ENCODE measurements at regions of chr7 and their contacts with region 1.

Region 1: GRCh38 chr7:76314042-76314721 is 11.7 kb downstream of the HSPB1 start:
- DNase-seq: peak; percentile 92
- H3K4me3 Mint-ChIP-seq: no peak overlapping the region
- H3K27ac Mint-ChIP-seq: peak overlapping the region; percentile 55
- H3K4me1 Mint-ChIP-seq: peaks cover 24% of the 10 kb centered on the region
- H3K27me3 Mint-ChIP-seq: no peaks in the 10 kb centered on the region

Region 2: GRCh38 chr7:76166404-76167255 is 147.6 kb before region 1 on chr7:
- intact Hi-C with region 1: loop called (anchors 1 kb)
- DNase-seq: peak; percentile 93
- H3K4me3 Mint-ChIP-seq: peak overlapping the region; percentile 85
- H3K27ac Mint-ChIP-seq: peak overlapping the region; percentile 85
- H3K4me1 Mint-ChIP-seq: peaks cover 10% of the 10 kb centered on the region
- H3K27me3 Mint-ChIP-seq: peaks cover 2% of the 10 kb centered on the region

Region 3: DNA sequence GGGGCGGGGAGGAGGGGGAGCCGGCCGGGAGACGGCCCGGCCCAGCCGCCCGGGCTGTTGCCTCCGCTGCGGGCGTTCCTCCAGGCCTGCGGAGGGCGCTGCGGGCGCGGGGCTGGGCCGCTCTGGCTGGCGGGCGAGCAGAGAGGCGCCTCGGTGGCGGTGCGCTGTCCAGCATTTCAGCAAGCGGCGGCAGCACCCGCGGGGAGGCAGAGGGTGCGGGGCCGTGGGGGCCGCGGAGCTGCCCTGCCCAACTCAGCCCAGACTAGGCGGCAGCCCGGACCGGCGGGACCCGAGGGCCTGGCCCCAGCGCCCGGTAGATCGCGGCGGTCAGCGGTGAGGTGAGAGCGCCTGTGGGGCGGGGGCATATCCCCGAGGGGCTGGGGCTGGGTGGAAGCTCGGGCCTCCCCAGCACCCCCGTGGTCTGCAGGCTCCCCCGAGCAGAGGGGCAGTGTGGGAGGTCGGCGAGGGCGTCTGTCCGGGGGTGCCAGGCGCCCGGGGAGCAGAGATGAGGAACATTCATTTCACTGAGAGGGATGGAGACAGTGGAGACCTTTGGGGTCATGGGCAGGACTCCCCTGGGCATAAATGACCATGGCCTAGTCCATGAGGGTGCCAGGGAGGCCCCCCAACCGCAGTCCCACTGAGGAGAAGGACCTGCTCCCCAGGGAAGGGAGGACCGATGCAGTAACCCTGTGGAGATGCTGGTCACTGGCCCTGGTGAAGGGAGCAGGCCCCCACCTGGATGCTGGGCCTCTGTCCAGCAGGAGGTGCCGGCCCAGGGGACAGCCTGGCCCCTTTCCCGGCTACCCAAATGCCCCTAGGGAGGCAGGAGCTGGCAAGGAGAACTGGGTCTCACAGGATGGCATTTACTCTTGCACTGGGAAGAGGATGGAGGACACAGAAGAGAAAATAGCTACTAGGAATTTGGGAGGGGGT is 112.2 kb before region 1 on chr7 and contains the start of gene SRRM3:
- intact Hi-C with region 1: loop called (anchors 1 kb)
- DNase-seq: peak; percentile 82
- H3K4me3 Mint-ChIP-seq: no peak within 1 kb of the TSS
- H3K27ac Mint-ChIP-seq: no peak within 1 kb of the TSS
- H3K4me1 Mint-ChIP-seq: no peaks in the 10 kb centered on the region
- H3K27me3 Mint-ChIP-seq: peaks cover 10% of the 10 kb centered on the region
- total RNA-seq, gene SRRM3: not detected in 2 replicates

Region 4: DNA sequence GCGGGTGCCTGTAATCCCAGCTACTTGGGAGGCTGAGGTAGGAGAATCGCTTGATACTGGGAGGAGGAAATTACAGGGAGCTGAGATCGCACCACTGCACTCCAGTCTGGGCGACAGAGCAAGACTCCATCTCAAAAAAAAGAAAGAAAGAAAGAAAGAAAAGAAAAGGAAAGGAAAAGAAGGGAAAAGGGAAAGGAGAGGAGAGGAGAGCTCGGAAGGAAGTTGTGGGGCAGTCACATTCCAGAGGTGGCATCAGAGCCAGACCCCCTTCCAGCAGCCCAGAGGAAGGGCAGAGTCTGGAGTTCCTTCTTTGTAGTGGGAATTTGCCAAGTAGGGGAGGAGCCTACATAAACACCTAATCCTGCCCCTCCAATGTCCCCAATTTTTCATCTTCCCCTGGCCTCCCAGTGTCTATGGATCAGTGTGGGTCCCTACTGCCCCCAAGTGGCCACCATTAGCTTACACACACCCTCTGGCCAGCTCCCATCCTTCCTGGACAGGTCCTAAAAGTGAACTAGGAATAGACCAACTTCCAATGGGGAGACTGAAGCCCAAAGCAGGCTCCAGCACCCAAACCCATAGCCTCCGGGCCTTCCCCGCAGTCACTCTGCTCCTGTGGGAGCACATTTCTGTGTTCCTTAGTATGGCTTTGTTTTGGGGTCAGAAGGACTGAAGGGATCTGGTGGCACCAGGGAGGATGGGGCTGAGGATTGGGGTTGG is 51.3 kb before region 1 on chr7:
- intact Hi-C with region 1: loop called (anchors 1 kb)
- DNase-seq: no peak
- H3K4me3 Mint-ChIP-seq: no peak overlapping the region
- H3K27ac Mint-ChIP-seq: no peak overlapping the region
- H3K4me1 Mint-ChIP-seq: peaks cover 7% of the 10 kb centered on the region
- H3K27me3 Mint-ChIP-seq: peaks cover 30% of the 10 kb centered on the region

Region 5: GRCh38 chr7:76302347-76303201 is 11.6 kb before region 1 on chr7 and contains the start of gene HSPB1:
- intact Hi-C with region 1: loop called (anchors 1 kb)
- DNase-seq: peak; percentile 34
- H3K4me3 Mint-ChIP-seq: peak within 1 kb of the TSS; percentile 89
- H3K27ac Mint-ChIP-seq: peak within 1 kb of the TSS; percentile 90
- H3K4me1 Mint-ChIP-seq: peaks cover 17% of the 10 kb centered on the region
- H3K27me3 Mint-ChIP-seq: peaks cover 19% of the 10 kb centered on the region
- total RNA-seq, gene HSPB1: 78.4 and 87.2 TPM in 2 replicates

Region 6: GRCh38 chr7:76359111-76359978 is 45.2 kb after region 1 on chr7:
- intact Hi-C with region 1: loop called (anchors 1 kb)
- DNase-seq: peak; percentile 92
- H3K4me3 Mint-ChIP-seq: peak overlapping the region; percentile 88
- H3K27ac Mint-ChIP-seq: peak overlapping the region; percentile 96
- H3K4me1 Mint-ChIP-seq: peaks cover 48% of the 10 kb centered on the region
- H3K27me3 Mint-ChIP-seq: no peaks in the 10 kb centered on the region

Measured in activated T-helper 1 cell treated with anti-CD3 and anti-CD28 coated beads, Interleukin-12 subunit alpha, Interleukin-12 subunit beta, Interleukin-2, Interleukin-4 antibody, amounts not matched to agents 30 ng/mL and 10 ng/mL and 1 ng/mL, durations not matched to agents 14 hours and 24 hours and 36 hours (primary cell).